GM12878 (cell line): ENCODE measurements at regions of chr7 and their contacts with region 1.

Region 1: DNA sequence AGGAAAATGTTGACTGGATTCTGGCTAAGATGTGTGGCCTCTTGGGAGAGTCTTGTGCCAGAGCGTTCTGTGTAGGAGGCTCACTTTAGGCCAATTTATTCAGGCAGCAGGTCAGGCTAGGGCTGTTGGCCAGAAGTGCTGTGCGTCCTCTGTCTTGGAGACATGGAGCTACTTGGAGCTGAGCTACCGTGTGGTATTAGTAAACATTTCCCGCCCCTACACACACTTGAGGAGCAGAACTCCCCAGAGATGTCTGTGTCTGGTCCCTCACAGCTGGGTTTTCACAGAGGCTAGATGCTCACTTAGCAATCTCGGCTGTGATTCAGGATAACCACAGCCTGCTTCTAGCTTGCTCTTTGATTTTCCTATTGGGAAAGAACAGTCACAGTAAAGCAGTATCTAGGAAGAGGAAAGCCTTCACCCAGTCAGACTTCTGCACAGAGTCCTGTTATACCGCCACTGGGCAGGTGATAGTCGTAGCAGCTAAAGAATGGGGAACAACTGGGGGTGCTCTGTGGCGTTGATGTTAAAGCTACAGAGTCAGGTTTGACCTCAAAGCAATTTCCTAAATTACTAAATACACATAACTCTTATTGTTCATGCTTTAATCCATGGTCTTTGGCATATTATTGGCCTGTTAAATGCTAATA is 86.7 kb downstream of the MDFIC start:
- DNase-seq: no peak
- ATAC-seq: peak; percentile 75
- H3K4me3 ChIP-seq: no peak overlapping the region
- H3K27ac ChIP-seq: peak overlapping the region; percentile 66
- H3K4me1 ChIP-seq: peaks cover 21% of the 10 kb centered on the region
- H3K27me3 ChIP-seq: no peaks in the 10 kb centered on the region
- CTCF ChIP-seq: no peak
- EP300 ChIP-seq: no peak
- POLR2A ChIP-seq: no peak
- RAD21 ChIP-seq: no peak

Region 2: DNA sequence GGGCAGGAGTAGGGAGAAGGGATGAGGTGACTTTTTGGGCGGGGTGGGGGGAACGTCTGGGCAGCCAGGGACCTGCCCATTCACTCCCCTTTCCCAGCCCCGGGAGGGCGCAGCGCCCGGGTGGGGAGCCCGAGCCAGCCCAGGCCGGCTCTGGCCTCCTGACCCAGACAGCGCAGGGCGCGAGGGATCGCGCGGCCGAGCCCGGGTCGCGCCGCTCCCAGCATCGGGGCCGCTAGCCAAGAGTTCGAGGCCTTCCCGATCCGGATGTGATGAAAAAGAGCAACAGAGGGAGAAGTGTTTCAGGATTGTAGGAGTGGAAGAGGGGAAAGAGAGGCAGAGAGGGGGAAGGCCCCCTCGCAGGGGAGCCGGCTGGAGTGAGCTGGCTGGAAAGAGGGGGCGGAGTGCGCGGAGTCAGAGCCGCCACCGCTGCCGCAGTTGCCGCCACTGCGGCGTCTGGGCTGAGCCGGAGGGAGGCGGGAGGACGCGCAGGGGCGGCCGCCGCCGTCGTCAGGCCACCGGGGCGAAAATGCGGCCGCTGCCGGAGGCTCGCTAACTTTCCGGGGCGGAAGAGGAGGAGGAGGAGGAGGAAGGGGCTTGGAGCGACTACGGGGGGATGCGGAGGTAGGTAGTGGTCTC is 86.5 kb before region 1 on chr7 and contains the start of gene MDFIC:
- CTCF ChIA-PET with region 1: interaction called, 3 read pairs
- POLR2A ChIA-PET with region 1: no interaction called
- RAD21 ChIA-PET with region 1: no interaction called
- SMC1A ChIA-PET with region 1: interaction called, 10 read pairs
- in situ Hi-C with region 1: no loop called
- intact Hi-C with region 1: no loop called
- DNase-seq: no peak
- ATAC-seq: peak; percentile 65
- H3K4me3 ChIP-seq: peak within 1 kb of the TSS; percentile 85
- H3K27ac ChIP-seq: peak within 1 kb of the TSS; percentile 92
- H3K4me1 ChIP-seq: peaks cover 20% of the 10 kb centered on the region
- H3K27me3 ChIP-seq: no peaks in the 10 kb centered on the region
- CTCF ChIP-seq: peak in 2 of 3 experiments; percentile 6 to 8; a peak in 1 of 6 replicates
- EP300 ChIP-seq: no peak
- POLR2A ChIP-seq: peak; percentile 90
- RAD21 ChIP-seq: no peak
- polyA plus RNA-seq, gene MDFIC: 11.5 to 16.1 TPM

Region 3: DNA sequence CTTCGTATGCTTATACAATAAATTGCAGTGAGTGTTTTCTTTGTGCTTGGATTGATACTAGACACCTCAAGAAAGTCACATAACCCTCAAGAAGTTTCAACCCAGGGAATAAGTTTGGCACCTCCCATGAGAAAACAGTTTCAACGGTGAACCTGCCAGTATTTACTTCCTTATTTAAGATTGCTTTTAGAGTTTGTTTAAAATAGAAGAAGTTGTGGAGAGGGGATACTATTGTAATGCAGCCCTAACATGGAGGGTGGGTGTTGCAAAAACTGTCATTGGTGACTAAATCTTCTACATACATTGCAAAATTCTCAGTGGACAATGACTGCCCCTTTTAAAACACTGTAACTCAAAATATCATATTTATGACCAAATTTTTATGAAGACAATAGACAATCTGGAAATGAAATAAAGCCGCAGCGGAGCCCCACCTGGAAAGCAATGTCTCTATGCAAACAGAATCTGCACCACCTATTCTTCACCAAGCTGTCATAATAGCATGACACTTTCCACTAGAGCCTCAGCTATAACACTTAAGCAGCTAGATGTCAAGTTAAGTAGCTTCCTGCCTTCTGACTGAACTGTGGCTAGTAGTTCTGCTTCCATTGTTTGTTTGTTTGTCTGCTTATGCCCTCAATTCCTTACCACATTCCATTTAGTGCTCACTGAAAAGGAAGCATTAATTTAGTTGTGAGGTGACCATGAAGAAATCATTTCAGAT is 11.5 kb after region 1 on chr7:
- CTCF ChIA-PET with region 1: interaction called, 3 read pairs
- POLR2A ChIA-PET with region 1: interaction called, 3 read pairs
- RAD21 ChIA-PET with region 1: no interaction called
- SMC1A ChIA-PET with region 1: interaction called, 13 read pairs
- in situ Hi-C with region 1: no loop called
- intact Hi-C with region 1: no loop called
- DNase-seq: no peak
- ATAC-seq: 0 out of 3 replicates have a peak, but pooled peaks have one; percentile 17
- H3K4me3 ChIP-seq: no peak overlapping the region
- H3K27ac ChIP-seq: no peak overlapping the region
- H3K4me1 ChIP-seq: no peaks in the 10 kb centered on the region
- H3K27me3 ChIP-seq: no peaks in the 10 kb centered on the region
- CTCF ChIP-seq: no peak
- EP300 ChIP-seq: no peak
- POLR2A ChIP-seq: no peak
- RAD21 ChIP-seq: no peak

Region 4: DNA sequence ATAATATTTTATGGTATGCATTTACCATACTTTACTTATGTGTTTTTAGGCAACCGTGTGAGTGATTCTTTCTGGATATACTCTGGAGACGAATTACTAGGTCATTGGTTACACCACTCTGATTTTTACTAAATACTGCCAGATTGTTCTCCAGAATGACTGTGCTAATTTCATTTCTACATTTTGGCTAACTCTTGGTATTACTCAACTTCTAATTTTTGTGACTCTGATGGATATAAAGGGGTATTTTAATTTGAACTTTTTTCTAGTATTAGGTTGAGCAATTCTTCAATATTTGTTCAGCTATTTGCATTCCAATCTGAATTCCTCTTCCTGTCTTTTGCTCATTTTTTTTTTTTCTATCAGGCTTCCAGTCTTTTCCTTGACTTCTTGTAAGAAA is 136.9 kb after region 1 on chr7:
- CTCF ChIA-PET with region 1: no interaction called
- POLR2A ChIA-PET with region 1: no interaction called
- RAD21 ChIA-PET with region 1: no interaction called
- SMC1A ChIA-PET with region 1: no interaction called
- in situ Hi-C with region 1: no loop called
- intact Hi-C with region 1: no loop called
- DNase-seq: peak; percentile 15
- ATAC-seq: peak; percentile 73
- H3K4me3 ChIP-seq: no peak overlapping the region
- H3K27ac ChIP-seq: no peak overlapping the region
- H3K4me1 ChIP-seq: no peaks in the 10 kb centered on the region
- H3K27me3 ChIP-seq: no peaks in the 10 kb centered on the region
- CTCF ChIP-seq: no peak
- EP300 ChIP-seq: peak in 1 of 2 experiments; percentile 42; a peak in 2 of 4 replicates
- POLR2A ChIP-seq: no peak
- RAD21 ChIP-seq: no peak

Region 5: GRCh38 chr7:115198143-115198542 is 189.6 kb after region 1 on chr7:
- CTCF ChIA-PET with region 1: no interaction called
- POLR2A ChIA-PET with region 1: no interaction called
- RAD21 ChIA-PET with region 1: no interaction called
- SMC1A ChIA-PET with region 1: no interaction called
- in situ Hi-C with region 1: no loop called
- intact Hi-C with region 1: no loop called
- DNase-seq: no peak
- ATAC-seq: no peak
- H3K4me3 ChIP-seq: no peak overlapping the region
- H3K27ac ChIP-seq: no peak overlapping the region
- H3K4me1 ChIP-seq: no peaks in the 10 kb centered on the region
- H3K27me3 ChIP-seq: no peaks in the 10 kb centered on the region
- CTCF ChIP-seq: no peak
- EP300 ChIP-seq: no peak
- POLR2A ChIP-seq: no peak
- RAD21 ChIP-seq: no peak